GM23248 (cell line): ENCODE measurements at regions of chr2 and their contacts with region 1.

Region 1: DNA sequence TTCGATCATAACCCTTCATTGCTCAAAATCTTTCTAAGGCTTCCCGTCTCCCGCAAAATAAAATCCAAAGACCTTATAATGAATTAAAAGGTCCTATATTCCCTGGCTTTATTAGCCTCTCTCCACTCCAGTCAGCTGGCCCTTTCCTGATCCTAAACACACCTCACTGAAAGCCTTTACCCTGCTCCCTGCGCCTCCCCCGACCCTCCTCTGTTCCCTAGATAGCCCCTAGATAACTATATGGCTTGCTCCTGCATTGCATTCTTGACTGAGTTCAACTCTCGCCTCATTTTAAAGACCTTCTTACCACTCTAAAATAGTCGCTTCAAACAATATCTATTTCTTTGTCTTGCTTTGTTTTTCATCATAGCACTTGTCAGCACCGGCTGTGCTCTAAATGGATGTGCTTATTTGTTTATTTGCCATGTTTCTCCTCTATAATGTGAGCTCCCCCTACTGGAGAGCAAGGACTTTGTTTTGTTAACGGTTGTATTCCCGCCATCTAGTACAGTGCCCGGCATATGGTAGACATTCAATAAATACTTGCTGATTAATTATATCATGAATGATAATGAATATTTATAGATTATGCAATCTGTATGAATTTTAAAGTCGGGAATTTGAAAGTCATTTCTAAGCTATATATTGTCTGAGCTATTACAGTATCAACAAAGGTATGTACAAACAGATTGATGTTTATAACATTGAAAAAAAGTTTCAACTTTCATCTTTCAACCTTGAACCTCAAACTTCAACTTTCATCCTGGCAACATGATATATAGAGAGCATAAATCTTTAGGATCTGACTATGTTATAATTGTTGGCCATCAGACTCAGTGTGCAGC is 32.4 kb upstream of the VIT start:
- DNase-seq: peak; percentile 86
- H3K4me3 ChIP-seq: no peak overlapping the region
- H3K27ac ChIP-seq: peak overlapping the region; percentile 13
- H3K4me1 ChIP-seq: peaks cover 32% of the 10 kb centered on the region
- H3K27me3 ChIP-seq: no peaks in the 10 kb centered on the region

Region 2: GRCh38 chr2:36355151-36355889 is 308.8 kb before region 1 on chr2 and contains the start of gene CRIM1:
- in situ Hi-C with region 1: loop called (anchors 10 kb)
- DNase-seq: peak; percentile 95
- H3K4me3 ChIP-seq: peak within 1 kb of the TSS; percentile 99
- H3K27ac ChIP-seq: peak within 1 kb of the TSS; percentile 93
- H3K4me1 ChIP-seq: peaks cover 42% of the 10 kb centered on the region
- H3K27me3 ChIP-seq: no peaks in the 10 kb centered on the region
- total RNA-seq, gene CRIM1: 485 and 499 TPM in 2 replicates

Region 3: GRCh38 chr2:36530178-36530982 is 133.7 kb before region 1 on chr2:
- in situ Hi-C with region 1: loop called (anchors 10 kb)
- DNase-seq: peak; percentile 84
- H3K4me3 ChIP-seq: no peak overlapping the region
- H3K27ac ChIP-seq: peak overlapping the region; percentile 63
- H3K4me1 ChIP-seq: peaks cover 43% of the 10 kb centered on the region
- H3K27me3 ChIP-seq: no peaks in the 10 kb centered on the region

Region 4: GRCh38 chr2:37059841-37060240 is 395.8 kb after region 1 on chr2:
- in situ Hi-C with region 1: no loop called
- DNase-seq: no peak
- H3K4me3 ChIP-seq: no peak overlapping the region
- H3K27ac ChIP-seq: no peak overlapping the region
- H3K4me1 ChIP-seq: no peaks in the 10 kb centered on the region
- H3K27me3 ChIP-seq: no peaks in the 10 kb centered on the region